Astrocyte of the cerebellum (primary cell): ENCODE measurements at regions of chr20 and their contacts with region 1.

Region 1: DNA sequence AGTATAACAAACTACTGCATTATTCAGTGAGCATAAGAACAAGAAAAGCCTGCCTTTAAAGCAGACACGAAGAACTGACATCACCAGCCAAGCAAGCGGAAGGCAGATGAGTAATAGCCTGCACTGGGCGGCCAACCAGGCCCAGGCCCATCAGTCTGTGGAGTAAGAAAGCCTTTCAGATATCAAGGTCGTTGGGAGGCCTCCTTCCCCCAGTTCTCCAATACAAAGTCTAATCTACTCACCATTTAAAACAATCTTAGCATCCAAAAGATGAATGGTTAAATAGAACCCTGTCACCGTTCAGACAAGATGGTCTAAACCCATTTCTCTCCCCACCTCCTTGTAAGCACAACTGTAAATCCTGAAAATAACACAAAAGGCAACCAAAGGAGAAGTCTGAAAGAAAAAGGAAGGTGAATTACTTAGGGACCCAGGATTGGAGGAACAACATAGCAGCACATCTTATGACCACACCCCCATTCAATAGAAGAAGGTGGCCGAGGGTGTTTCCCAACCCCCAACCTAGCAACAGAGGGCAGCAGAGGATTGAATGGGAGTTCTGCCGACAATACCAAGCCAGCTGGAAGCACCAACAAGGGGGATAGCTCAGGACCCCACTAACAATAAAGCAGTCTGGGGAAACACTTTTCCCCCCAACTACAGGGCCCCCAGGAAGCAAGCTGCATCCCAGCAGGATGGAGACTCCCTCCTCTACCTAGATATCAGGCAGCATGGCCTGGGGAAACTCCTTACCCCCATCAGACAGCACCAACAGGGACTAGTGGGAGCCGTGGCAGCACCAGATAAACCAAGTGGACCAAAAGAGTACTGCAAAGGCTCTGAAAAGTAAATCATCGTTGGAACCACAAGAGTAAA is 67.9 kb downstream of the ZHX3 start:
- DNase-seq: peak; percentile 55
- H3K4me3 ChIP-seq: no peak overlapping the region
- CTCF ChIP-seq: peak; percentile 40

Region 2: GRCh38 chr20:41309817-41310216 is 60.2 kb after region 1 on chr20:
- in situ Hi-C with region 1: loop called (anchors 5 kb)
- DNase-seq: no peak
- H3K4me3 ChIP-seq: no peak overlapping the region
- CTCF ChIP-seq: no peak